Activated B cell treated with CpG ODN at 0.5 μM for 24 hours (primary cell): ENCODE measurements at regions of chr7 and their contacts with region 1.

Region 1: GRCh38 chr7:103447073-103447951 is 1.3 kb upstream of the SLC26A5 start:
- DNase-seq: no peak
- ATAC-seq: no peak
- H3K4me3 Mint-ChIP-seq: no peak overlapping the region
- H3K27ac Mint-ChIP-seq: no peak overlapping the region
- H3K4me1 Mint-ChIP-seq: peaks cover 10% of the 10 kb centered on the region
- H3K27me3 Mint-ChIP-seq: peaks cover 63% of the 10 kb centered on the region
- CTCF ChIP-seq: no peak

Region 2: DNA sequence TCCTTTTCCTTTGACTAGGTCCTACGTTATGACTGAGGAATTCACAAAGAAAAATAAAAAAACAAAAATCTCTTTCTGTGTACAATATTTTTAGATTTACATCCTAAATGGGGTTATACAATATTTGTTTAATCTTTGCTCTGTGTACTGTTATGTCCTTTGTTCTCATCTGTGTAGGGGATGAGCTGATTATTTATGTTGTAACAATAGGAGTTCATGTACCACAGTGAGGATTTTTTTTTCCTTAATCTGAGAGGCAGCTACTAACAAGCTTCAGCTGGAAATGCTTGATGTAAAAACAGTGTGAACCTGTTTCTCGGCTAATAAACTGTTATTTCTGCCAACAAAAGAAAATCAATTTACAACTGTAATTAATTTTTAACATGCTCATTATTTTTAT is 702.5 kb after region 1 on chr7:
- CTCF ChIA-PET with region 1: no interaction called
- POLR2A ChIA-PET with region 1: no interaction called
- intact Hi-C with region 1: loop called (anchors 5 kb)
- DNase-seq: no peak
- ATAC-seq: no peak
- H3K4me3 Mint-ChIP-seq: no peak overlapping the region
- H3K27ac Mint-ChIP-seq: no peak overlapping the region
- H3K4me1 Mint-ChIP-seq: no peaks in the 10 kb centered on the region
- H3K27me3 Mint-ChIP-seq: no peaks in the 10 kb centered on the region
- CTCF ChIP-seq: no peak

Region 3: DNA sequence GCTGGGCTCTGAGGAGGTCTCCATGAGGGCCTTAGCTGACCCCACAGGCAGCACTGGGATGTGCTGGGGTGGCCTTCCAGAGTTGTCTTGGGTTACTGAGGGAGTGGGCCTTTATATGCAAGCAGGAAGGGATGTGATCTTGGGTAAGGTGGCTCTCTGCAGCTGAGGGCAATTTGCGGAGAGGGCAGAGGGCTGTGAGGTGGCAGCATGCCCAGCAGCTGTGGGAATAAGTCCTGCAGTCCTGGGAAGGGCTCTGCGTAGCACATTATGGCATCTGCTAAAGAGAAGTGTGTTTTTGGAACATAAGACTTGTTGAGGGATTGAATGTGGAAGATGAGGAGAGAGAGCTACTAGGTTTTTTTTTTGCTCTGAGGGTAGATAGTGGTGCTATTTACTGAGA is 1467.1 kb after region 1 on chr7:
- CTCF ChIA-PET with region 1: no interaction called
- POLR2A ChIA-PET with region 1: no interaction called
- intact Hi-C with region 1: loop called (anchors 10 kb)
- DNase-seq: no peak
- ATAC-seq: no peak
- H3K4me3 Mint-ChIP-seq: no peak overlapping the region
- H3K27ac Mint-ChIP-seq: no peak overlapping the region
- H3K4me1 Mint-ChIP-seq: no peaks in the 10 kb centered on the region
- H3K27me3 Mint-ChIP-seq: no peaks in the 10 kb centered on the region
- CTCF ChIP-seq: no peak

Region 4: DNA sequence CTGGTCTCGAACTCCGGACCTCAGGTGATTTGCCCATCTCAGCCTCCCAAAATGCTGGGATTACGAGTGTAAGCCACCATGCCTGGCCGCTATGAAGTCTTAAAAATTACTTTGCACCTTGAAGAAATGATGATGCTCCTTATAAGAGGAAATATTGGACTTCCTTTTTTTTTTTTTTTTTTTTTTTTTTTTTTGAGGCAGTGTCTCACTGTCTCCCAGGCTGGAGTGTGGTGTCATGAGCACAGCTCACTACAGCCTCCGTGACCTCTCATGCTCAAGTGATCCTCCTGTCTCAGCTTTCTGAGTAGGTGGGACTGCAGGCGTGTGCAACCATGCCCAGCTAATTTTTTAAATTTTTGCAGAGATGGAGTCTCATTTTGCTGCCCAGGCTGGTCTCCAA is 1632.0 kb after region 1 on chr7:
- CTCF ChIA-PET with region 1: no interaction called
- POLR2A ChIA-PET with region 1: no interaction called
- intact Hi-C with region 1: loop called (anchors 10 kb)
- DNase-seq: no peak
- ATAC-seq: no peak
- H3K4me3 Mint-ChIP-seq: no peak overlapping the region
- H3K27ac Mint-ChIP-seq: no peak overlapping the region
- H3K4me1 Mint-ChIP-seq: no peaks in the 10 kb centered on the region
- H3K27me3 Mint-ChIP-seq: no peaks in the 10 kb centered on the region
- CTCF ChIP-seq: no peak